ENCODE measurements at regions of chr7 and their contacts with region 1.

Region 1: GRCh38 chr7:93921607-93922566 is at the start of gene GNG11:
- DNase-seq: peak; percentile 90
- H3K4me3 ChIP-seq: peak within 1 kb of the TSS; percentile 95 to 100 (median 100)
- H3K27ac ChIP-seq: peak within 1 kb of the TSS; percentile 99
- H3K4me1 ChIP-seq: peaks cover 25% of the 10 kb centered on the region
- H3K27me3 ChIP-seq: no peaks in the 10 kb centered on the region
- CTCF ChIP-seq: no peak
- POLR2A ChIP-seq: peak; percentile 86
- total RNA-seq, gene GNG11: 208 and 215 TPM in 2 replicates

Region 2: DNA sequence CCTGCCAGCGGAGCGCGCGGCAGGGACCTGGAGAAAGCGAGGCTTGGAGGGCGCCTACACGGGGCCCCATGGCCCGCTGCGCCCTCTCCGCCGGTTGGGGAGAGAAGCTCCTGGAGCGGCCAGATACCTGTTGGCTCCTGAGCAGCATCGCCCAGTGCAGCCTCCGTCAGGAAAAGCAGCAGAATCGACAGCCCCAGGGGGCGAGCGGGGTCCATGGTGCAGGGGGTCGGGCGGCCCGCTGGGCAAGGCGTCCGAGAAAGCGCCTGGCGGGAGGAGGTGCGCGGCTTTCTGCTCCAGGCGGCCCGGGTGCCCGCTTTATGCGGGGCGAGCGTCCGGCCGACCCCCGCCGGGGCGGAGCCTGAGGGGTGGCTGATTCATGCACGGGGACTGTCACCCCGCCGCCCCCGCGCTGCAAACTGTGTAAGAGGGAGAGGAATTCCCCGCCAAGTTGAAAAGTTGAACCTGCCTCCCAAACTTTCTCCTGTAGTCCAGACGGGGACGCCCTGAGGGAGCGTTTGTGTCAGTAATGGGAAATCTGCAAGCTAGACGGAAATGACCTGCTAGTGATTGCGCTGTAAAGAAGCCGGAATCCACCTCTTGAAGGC is 31.3 kb before region 1 on chr7 and contains the start of gene TFPI2:
- CTCF ChIA-PET with region 1: no interaction called
- POLR2A ChIA-PET with region 1: no interaction called
- dilution Hi-C with region 1: no loop called
- intact Hi-C with region 1: no loop called
- DNase-seq: peak; percentile 62
- H3K4me3 ChIP-seq: peak within 1 kb of the TSS; percentile 63 to 97 (median 82)
- H3K27ac ChIP-seq: no peak within 1 kb of the TSS
- H3K4me1 ChIP-seq: peaks cover 23% of the 10 kb centered on the region
- H3K27me3 ChIP-seq: peaks cover 0 to 3% of the 10 kb centered on the region in 2 experiments
- CTCF ChIP-seq: no peak
- POLR2A ChIP-seq: no peak
- total RNA-seq, gene TFPI2: 33.1 and 65.9 TPM in 2 replicates

Region 3: DNA sequence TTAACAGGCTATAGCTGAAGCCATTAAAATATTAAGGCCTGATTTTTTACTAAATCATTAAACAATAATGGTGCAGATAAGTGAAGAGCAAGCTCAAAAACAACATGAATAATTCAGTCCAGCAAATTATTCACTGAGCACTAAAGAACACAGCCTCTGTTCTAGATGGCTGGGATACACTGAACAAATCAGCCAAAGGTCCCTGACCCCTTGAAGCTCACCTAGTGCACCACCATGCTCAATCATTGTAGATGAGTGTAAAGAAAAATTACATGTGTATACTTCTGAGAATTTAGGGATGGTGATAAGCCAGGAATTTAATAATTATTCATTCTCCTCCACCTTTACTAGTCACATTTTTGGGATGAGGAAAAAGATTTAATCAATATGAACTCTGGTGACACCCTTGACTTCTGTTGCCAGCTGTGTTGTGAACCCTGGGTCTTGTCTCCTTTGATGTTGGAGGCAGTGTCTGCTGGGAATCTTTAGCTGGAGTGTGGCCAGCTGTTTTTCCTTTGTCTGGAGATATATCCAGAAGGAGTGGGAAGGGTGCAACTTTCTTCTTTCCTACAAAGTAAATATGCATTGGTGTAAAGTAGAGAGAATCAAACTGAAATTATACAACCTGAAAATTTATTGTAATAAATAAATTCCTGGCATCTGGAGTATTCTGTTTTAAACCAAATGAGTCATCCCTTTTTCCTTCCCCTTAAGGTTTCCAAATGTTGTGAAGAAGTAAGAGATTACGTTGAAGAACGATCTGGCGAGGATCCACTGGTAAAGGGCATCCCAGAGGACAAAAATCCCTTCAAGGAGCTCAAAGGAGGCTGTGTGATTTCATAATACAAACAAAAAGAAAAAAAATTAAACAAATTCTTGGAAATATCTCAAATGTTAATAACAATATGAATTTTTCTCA is 11.6 kb before region 1 on chr7:
- CTCF ChIA-PET with region 1: interaction called, 9 read pairs
- POLR2A ChIA-PET with region 1: interaction called, 12 read pairs
- dilution Hi-C with region 1: no loop called
- intact Hi-C with region 1: loop called (anchors 1 kb)
- DNase-seq: peak; percentile 86
- H3K4me3 ChIP-seq: peak overlapping the region in 1 of 3 experiments; percentile 18
- H3K27ac ChIP-seq: peak overlapping the region; percentile 47
- H3K4me1 ChIP-seq: peaks cover 54% of the 10 kb centered on the region
- H3K27me3 ChIP-seq: no peaks in the 10 kb centered on the region
- CTCF ChIP-seq: no peak
- POLR2A ChIP-seq: no peak

Region 4: GRCh38 chr7:93958216-93958615 is 36.3 kb after region 1 on chr7:
- CTCF ChIA-PET with region 1: interaction called, 8 read pairs
- POLR2A ChIA-PET with region 1: no interaction called
- dilution Hi-C with region 1: no loop called
- intact Hi-C with region 1: loop called (anchors 1 kb)
- DNase-seq: peak; percentile 86
- H3K4me3 ChIP-seq: peak overlapping the region in 2 of 3 experiments; percentile 16 to 37
- H3K27ac ChIP-seq: peak overlapping the region; percentile 93
- H3K4me1 ChIP-seq: peaks cover 21% of the 10 kb centered on the region
- H3K27me3 ChIP-seq: no peaks in the 10 kb centered on the region
- CTCF ChIP-seq: no peak
- POLR2A ChIP-seq: no peak

Region 5: GRCh38 chr7:94069162-94069739 is 147.4 kb after region 1 on chr7:
- CTCF ChIA-PET with region 1: interaction called, 8 read pairs
- POLR2A ChIA-PET with region 1: no interaction called
- dilution Hi-C with region 1: no loop called
- intact Hi-C with region 1: loop called (anchors 2 kb)
- DNase-seq: no peak
- H3K4me3 ChIP-seq: no peak overlapping the region
- H3K27ac ChIP-seq: no peak overlapping the region
- H3K4me1 ChIP-seq: peaks cover 20% of the 10 kb centered on the region
- H3K27me3 ChIP-seq: peaks cover 50 to 74% of the 10 kb centered on the region in 2 experiments
- CTCF ChIP-seq: no peak
- POLR2A ChIP-seq: no peak

Region 6: DNA sequence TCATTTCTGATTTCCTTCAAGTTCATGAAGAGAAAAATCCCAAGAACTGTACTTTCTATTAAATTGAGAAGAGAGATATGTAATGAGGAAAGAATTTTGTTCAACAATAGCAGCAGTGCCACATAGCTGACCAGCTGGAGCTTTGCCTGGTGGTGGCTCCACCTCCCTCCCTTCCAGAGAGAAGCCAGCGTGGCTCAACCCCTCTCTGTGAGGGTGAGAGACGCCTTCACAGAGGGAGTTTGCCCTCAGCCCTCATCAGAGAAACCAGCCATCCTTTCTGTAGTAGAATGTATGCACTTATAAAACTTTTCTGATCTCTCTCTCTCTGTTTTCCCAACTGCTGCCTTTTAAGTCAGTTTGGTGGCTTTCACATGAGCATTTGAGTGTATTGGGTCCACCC is 452.3 kb after region 1 on chr7:
- CTCF ChIA-PET with region 1: no interaction called
- POLR2A ChIA-PET with region 1: no interaction called
- dilution Hi-C with region 1: no loop called
- intact Hi-C with region 1: loop called (anchors 5 kb)
- DNase-seq: peak; percentile 92
- H3K4me3 ChIP-seq: no peak overlapping the region
- H3K27ac ChIP-seq: peak overlapping the region; percentile 85
- H3K4me1 ChIP-seq: peaks cover 21% of the 10 kb centered on the region
- H3K27me3 ChIP-seq: no peaks in the 10 kb centered on the region
- CTCF ChIP-seq: no peak
- POLR2A ChIP-seq: no peak

Measured in endothelial cell of umbilical vein (primary cell).